Cardiac septum (tissue), 1 donor: ENCODE measurements at regions of chr2 and their contacts with region 1.

Region 1: DNA sequence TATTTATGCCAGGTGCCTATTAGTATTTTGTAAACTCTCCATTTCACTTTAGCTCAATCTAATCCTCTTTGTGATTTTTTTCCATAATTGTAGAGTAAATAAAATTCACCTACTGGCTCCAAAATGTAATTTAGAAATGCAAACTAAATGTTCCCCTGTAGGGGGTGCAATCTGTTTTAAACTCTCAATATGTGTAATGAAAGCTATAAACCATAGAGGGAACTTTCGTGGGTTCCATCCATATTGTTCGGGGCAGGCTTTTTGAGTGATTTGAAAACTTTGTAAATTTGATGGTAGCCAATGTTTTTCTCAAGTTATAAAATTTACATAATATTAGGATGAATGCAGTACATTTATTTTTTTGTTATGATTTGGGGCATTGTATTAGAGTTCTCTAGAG is 49.4 kb downstream of the TSPYL6 start:
- DNase-seq: no peak

Region 2: GRCh38 chr2:54330162-54330925 is 123.7 kb after region 1 on chr2:
- intact Hi-C with region 1: loop called (anchors 2 kb)
- DNase-seq: peak; percentile 98

Region 3: GRCh38 chr2:54370405-54371104 is 164.0 kb after region 1 on chr2:
- intact Hi-C with region 1: loop called (anchors 5 kb)
- DNase-seq: no peak

Region 4: DNA sequence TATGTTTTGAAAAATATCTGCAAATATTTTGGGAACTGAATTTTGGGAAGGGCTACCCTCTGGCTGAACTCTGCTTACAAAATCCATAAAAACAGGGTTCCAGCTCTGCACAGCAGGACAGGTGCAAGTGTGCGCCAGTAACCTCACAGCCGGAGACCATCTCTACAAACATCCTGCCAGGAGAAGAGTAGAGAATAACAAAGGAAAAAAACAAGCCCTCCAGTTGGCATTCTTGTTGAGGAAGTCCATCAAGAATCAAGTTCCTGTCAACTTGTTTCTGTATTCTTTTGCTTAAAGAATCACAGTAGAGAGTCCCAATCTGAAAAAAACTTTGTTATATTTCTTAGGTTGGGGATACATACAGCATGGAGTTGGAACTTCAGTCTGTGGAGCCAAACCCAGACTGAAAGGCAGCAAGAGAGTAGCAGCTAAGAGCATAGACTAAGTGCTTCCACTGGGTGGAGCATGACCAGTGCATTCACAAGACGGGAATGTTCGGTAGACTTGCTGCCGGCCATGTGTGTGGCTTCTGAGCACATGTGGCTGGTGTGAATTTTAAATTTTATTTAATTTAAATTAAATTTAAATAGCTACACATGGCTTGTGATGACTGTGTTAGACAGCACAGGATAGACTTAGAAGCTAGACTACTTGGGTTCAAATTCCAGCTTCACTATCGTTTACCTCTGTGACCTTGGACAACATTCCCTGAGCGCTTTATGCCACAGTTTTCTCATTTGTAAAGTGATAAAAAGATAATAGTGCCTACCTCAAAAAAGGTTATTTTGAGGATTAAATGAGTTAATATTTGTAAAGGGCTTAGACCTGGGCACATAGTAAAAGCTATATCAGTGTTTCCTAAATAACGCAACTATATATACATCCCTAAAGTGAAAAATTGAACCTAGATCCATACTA is 291.4 kb after region 1 on chr2:
- intact Hi-C with region 1: loop called (anchors 5 kb)
- DNase-seq: no peak

Region 5: GRCh38 chr2:54522624-54523281 is 316.2 kb after region 1 on chr2:
- intact Hi-C with region 1: loop called (anchors 5 kb)
- DNase-seq: no peak

Region 6: DNA sequence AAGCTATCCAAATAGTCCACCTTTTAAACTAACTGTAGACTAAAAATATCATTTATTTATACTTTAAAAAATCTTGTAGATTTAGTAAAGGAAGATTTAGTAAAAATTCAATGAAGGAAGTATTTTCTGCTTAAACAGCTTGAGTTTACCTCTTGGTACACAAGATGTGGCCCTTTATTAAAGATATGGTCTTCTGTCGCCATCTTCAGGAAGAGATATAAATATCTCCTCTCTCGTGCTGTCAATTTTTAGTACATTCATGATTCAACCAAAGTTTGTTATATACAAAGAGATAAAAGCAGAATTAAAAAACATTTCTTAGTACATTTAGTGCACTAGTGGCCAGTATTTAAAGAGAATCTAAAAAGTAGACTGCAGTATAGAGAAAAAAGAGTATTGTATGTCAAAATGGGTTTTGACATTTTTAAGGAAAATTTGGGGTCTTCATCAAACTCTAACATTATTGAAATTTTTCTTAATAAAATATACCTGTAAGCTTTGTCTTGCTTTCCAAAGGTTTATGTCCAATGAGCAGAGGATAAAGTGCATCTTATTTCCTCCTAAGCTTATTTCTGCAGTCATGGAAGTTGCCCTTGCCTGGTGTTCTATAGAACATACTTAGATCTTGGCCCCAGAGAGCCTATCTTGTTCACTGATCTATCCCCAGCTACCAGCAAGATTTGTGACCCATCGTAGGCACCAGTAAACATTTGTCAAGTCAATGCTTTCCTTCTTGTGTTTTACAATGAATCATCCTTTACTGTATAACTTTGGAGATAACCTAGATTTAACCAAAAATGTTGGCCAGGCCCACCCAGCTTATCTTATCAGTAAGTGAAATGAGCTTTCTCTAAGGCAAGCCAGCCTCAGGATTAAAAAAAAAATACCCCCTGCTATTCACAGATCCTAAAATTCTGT is 498.4 kb after region 1 on chr2:
- intact Hi-C with region 1: loop called (anchors 10 kb)
- DNase-seq: no peak